HEK293T (cell line): ENCODE measurements at regions of chr11 and their contacts with region 1.

Region 1: DNA sequence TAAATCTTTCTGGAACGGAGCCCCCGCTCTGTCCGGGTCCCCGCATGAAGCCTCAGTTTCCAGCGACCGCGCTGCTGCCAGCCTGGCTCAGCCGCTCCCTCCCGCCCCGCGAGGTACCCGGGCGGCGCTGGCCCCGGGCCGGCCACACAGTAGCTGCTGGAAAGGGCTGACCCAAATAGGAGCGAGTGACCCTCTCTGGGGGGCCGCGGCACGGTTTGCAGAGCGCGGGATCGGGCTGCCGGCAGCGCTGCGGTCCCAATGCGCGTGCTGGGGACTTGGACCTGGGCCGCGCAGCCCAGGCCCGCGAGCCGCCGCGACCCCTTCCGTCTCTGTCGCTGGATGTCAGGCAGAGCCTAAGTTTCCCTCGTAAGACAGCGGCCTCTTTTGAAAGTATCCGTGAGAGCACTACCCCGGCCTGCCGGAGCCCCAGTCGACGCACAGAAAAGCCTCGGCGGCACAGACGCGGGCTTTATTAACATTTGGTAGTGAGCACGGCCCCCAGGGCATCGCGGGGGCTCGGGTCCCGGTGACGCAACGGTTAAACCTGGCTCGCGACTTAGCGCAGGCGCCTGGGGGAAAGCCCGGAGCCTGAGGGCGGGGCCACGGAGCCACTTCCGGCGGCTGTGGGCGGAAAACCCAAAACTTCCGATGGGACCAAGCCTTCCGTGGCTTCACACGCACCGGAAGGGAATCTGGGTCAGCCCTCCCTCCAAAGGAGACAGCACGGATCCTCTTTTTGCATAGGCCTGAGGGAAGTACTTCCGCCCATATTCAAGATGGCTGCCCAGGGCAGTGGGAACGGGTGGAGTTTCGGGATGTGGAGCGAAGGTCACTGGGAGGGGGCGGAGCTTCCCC is 14.9 kb downstream of the BAD start:
- DNase-seq: peak; percentile 92

Region 2: GRCh38 chr11:64204464-64204989 is 65.1 kb before region 1 on chr11:
- CTCF ChIA-PET with region 1: interaction called, 3 read pairs
- POLR2A ChIA-PET with region 1: interaction called, 23 read pairs
- DNase-seq: peak; percentile 78

Region 3: DNA sequence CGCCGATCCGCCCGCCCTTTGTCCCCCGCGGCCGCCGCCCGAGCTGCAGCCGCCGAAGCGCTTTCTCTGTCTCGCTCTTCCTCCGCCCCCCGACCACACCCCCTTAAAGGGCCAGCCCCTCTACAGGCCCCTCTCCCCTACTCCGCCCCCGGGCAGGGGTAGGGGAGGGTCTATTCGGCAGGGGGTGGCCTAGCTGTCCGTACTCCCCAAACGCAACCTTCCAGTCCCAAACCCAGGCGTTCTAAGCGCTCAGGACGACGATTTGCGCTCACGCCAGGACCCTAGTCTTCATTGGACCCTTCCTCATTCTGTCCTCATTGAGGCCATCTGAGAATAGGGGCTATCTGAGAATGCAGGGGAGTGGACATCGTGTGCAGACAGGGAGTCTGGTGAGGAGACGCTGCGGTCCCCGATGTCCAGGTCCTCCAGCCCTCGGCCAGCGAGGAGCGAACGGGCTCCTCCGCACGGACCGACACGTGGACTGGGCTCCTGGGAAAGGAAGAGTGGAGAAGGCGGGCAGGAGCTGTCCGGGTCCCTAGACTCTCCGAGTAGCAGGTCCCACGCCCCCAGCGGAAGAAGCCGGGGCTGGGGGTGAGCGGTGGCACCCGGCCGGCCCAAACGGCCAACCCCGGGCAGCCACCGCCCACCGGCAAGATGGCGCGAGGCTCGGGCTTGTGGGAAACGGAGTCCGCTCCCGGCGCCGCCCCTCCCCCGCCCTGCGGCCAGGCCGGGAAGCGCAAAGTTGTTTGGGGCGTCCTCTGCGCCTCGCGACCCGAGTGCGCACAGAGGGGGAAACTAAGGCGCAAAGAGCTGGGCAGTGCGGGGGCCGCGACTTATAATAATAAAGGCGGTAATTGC is 22.5 kb before region 1 on chr11 and contains the start of gene PPP1R14B:
- CTCF ChIA-PET with region 1: interaction called, 8 read pairs
- POLR2A ChIA-PET with region 1: interaction called, 78 read pairs
- DNase-seq: peak; percentile 82

Region 4: GRCh38 chr11:64291262-64291751 is 21.7 kb after region 1 on chr11 and contains the start of gene KCNK4:
- CTCF ChIA-PET with region 1: no interaction called
- POLR2A ChIA-PET with region 1: interaction called, 81 read pairs
- DNase-seq: no peak

Region 5: DNA sequence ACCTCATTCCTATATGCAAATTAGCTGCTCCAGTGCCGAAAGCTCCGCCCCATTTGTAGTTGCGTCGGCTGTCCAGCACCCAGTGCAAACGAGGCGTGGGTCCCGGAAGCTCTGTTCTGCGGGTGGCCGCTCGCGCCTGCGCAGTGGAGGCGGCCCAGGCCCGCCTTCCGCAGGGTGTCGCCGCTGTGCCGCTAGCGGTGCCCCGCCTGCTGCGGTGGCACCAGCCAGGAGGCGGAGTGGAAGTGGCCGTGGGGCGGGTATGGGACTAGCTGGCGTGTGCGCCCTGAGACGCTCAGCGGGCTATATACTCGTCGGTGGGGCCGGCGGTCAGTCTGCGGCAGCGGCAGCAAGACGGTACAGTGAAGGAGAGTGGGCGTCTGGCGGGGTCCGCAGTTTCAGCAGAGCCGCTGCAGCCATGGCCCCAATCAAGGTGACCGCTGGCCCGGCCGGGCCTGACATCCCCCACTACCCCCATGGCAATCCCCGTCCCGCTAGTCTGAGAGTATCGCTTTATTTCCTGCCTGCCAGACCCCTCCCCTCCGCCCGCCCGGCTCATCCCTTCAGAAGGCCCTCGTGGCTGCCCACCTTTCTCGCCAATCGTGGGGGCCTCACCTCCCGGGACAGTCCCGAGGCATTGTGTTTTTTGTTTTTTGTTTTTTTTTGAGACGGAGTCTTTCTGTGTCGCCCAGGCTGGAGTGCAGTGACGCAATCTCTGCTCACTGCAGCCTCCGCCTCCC is 48.5 kb after region 1 on chr11 and contains the start of gene PRDX5:
- CTCF ChIA-PET with region 1: interaction called, 5 read pairs
- POLR2A ChIA-PET with region 1: interaction called, 21 read pairs
- DNase-seq: peak; percentile 96